Calu3 (cell line): ENCODE measurements at regions of chr15 and their contacts with region 1.

Region 1: DNA sequence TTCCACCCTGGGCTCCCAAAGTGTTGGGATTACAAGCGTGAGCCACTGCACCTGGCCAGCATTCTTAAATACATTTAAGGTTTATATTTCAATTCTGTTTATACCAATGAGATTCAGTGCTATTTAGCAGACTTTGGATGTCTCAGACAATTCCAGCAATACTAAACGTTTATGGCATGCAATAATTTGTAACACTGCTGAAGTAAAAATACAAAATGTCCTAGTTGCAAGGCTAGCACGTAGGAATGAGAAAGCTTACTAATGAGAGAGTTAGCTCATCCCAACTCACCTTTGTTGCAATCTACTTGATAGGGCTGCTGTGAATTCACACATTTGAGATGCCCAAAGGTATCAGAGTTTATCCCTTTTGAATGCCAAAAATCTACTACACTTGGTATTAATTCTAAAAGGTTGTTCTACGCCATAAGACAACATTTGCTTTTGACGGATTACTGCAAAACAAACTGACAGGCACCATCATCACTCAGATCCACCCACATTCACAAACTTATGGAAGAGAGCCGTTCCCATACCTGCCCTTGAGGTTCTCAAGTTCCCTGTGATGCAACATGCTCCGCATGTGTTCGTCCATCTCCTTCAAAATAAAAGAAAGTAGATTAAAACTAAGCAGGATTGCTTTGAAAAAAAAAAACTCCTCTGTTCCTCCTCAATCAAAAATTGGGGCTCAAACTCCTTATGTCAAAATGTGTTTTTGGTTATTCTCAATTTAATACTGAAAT is 25.3 kb downstream of the ZNF106 start:
- DNase-seq: no peak
- H3K4me3 Mint-ChIP-seq: no peak overlapping the region
- H3K27ac Mint-ChIP-seq: no peak overlapping the region
- H3K4me1 Mint-ChIP-seq: no peaks in the 10 kb centered on the region
- H3K27me3 Mint-ChIP-seq: no peaks in the 10 kb centered on the region
- CTCF ChIP-seq: no peak

Region 2: GRCh38 chr15:42373936-42374335 is 91.8 kb before region 1 on chr15:
- CTCF ChIA-PET with region 1: interaction called, 12 read pairs
- intact Hi-C with region 1: no loop called
- DNase-seq: no peak
- H3K4me3 Mint-ChIP-seq: no peak overlapping the region
- H3K27ac Mint-ChIP-seq: no peak overlapping the region
- H3K4me1 Mint-ChIP-seq: no peaks in the 10 kb centered on the region
- H3K27me3 Mint-ChIP-seq: no peaks in the 10 kb centered on the region
- CTCF ChIP-seq: no peak